Activated T-helper 1 cell treated with anti-CD3 and anti-CD28 coated beads, Interleukin-12 subunit alpha, Interleukin-12 subunit beta, Interleukin-2, Interleukin-4 antibody, amounts not matched to agents 30 ng/mL and 10 ng/mL and 1 ng/mL, durations not matched to agents 14 hours and 24 hours and 36 hours (primary cell): ENCODE measurements at regions of chr12 and their contacts with region 1.

Region 1: DNA sequence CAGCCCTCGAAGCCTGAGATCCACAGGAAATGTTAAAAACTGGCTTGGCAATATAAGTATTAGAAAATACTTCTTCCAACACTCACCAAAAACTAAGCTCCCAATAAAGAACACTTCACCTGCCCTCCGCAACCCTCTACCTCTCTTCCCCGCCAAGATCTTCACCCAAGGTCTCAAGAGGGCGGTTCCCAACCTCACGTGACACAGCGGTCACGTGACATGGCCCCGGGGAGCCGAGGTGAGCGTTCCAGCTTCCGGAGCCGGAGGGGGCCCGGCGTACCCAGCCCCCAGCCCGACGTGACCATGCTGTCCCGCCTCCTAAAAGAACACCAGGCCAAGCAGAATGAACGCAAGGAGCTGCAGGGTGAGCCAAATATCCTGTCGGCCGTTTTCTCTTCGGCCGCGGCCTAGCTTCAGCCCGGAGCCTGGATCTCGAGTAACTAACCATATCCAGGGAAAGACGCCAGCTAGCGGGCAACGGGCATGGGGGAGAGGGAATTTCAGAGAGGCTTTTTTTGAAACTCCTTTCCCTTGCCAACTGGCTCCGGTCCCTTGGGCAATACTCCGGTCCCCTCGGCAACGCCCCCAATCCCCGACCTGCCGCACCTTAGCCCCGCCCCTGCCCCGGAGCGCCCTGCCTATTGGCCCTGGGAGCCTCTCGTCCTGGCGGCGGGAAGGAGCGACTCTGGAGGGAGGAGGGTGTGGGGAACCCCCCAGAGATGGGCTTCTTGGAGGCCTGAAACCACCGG is at the start of gene BLOC1S1:
- DNase-seq: peak; percentile 90
- H3K4me3 Mint-ChIP-seq: peak within 1 kb of the TSS; percentile 91
- H3K27ac Mint-ChIP-seq: peak within 1 kb of the TSS; percentile 93
- H3K4me1 Mint-ChIP-seq: peaks cover 34% of the 10 kb centered on the region
- H3K27me3 Mint-ChIP-seq: peaks cover 16% of the 10 kb centered on the region
- total RNA-seq, gene BLOC1S1: 62.5 and 64.8 TPM in 2 replicates

Region 2: GRCh38 chr12:55642669-55643068 is 73.3 kb before region 1 on chr12:
- intact Hi-C with region 1: loop called (anchors 2 kb)
- DNase-seq: no peak
- H3K4me3 Mint-ChIP-seq: no peak overlapping the region
- H3K27ac Mint-ChIP-seq: no peak overlapping the region
- H3K4me1 Mint-ChIP-seq: peaks cover 32% of the 10 kb centered on the region
- H3K27me3 Mint-ChIP-seq: peaks cover under 1% of the 10 kb centered on the region

Region 3: DNA sequence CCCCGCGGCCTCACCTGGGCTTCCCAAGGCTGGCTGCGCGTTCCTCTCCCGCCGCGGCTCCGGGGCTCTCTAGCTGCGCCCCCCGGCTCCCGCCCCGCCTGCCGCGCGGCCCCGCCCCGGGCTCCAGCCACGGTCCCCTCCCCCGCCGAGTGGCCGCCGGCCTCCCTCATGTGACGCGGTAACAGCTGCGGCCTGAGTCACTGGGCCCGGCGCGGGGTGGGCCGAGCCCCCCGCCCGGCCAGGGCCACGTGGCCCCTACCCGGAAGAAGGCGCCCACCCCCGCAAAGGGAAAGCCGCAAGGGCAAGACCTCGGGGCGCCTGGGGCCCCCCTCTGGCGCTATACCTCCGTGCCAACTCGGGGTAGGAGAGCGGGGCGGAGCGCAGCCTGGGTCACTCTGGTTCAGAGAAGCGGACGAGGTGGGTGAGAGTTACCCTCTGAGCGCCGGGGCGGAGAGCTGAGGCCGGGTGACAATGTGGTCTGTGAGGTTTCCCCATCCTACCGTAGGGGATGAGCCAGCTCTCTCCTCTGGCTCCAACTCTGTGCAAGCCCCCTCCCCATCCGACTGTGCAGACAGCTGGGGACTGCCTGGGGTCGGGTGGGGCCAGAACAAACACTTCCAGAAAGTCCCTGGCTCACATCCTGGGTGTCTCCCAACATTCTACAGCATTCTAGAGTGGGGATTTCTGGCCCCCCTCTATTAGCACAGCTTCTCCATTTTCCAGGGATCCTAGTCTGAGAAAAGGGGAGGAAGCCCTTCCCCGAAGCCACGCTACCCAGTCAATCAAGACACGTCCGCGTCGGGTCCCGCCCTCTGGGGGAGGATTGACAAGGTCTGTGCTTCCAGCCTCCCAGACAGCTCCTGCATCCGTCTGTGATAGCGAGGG is 13.2 kb after region 1 on chr12 and contains the start of gene CD63:
- intact Hi-C with region 1: loop called (anchors 1 kb)
- DNase-seq: peak; percentile 50
- H3K4me3 Mint-ChIP-seq: peak within 1 kb of the TSS; percentile 90
- H3K27ac Mint-ChIP-seq: peak within 1 kb of the TSS; percentile 96
- H3K4me1 Mint-ChIP-seq: peaks cover 48% of the 10 kb centered on the region
- H3K27me3 Mint-ChIP-seq: peaks cover 1% of the 10 kb centered on the region
- total RNA-seq, gene CD63: 183 and 198 TPM in 2 replicates